Activated B cell treated with CpG ODN at 0.5 μM for 24 hours (primary cell): ENCODE measurements at regions of chr18 and their contacts with region 1.

Region 1: GRCh38 chr18:11883153-11883552 is 25.0 kb downstream of the MPPE1 start:
- DNase-seq: no peak
- ATAC-seq: peak; percentile 95
- H3K4me3 Mint-ChIP-seq: peak overlapping the region; percentile 6
- H3K27ac Mint-ChIP-seq: peak overlapping the region; percentile 74
- H3K4me1 Mint-ChIP-seq: peaks cover 48% of the 10 kb centered on the region
- H3K27me3 Mint-ChIP-seq: no peaks in the 10 kb centered on the region
- CTCF ChIP-seq: no peak

Region 2: DNA sequence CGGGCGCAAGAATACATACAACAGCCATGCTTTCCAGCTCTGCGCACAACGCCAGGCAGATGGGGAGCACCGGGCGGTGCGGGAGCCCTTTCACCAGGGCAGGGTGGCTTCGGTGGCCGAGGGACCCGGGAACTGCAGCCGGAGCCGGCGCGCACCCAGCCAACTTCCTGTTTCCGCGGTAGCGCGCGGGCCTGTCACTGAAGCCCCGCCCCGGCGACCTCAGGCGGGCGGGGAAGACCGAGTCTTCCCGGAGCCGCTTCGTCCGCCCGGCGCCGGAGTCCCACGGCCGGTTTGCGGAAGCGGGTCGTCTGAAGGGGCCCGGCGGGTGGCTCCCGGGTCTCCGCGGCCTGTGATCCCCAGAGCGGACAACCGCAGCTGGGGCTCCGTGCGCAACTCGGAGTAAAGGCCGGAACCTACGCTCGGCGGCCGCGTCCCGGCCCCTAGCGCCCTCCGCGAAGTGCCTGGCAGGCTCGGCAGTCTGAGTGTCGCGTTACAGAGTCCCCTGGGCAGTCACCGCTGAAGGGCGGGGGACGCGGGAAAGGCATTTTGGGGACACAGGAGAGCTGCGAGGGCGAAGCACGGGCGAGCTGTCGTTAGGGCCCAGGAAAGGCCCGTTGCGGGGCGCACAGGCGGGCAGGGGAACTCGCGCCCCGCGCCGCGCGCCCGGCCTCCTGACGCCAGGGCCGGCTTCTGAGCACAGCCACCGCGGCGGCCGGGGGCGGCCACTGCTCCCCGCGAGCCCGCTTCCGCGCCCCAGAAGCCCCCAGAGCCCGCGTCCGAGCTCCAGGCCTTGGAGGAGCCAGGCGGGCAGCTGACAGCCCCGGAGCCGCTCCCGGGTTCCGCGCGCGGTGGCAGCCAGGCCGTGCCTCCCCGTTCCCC is 25.3 kb after region 1 on chr18 and contains the start of gene MPPE1:
- CTCF ChIA-PET with region 1: no interaction called
- POLR2A ChIA-PET with region 1: interaction called, 8 read pairs
- intact Hi-C with region 1: loop called (anchors 1 kb)
- DNase-seq: peak; percentile 87
- ATAC-seq: peak; percentile 91
- H3K4me3 Mint-ChIP-seq: peak within 1 kb of the TSS; percentile 94
- H3K27ac Mint-ChIP-seq: peak within 1 kb of the TSS; percentile 94
- H3K4me1 Mint-ChIP-seq: peaks cover 25% of the 10 kb centered on the region
- H3K27me3 Mint-ChIP-seq: no peaks in the 10 kb centered on the region
- CTCF ChIP-seq: no peak
- total RNA-seq, gene MPPE1: 39.0 and 52.9 TPM in 2 replicates

Region 3: DNA sequence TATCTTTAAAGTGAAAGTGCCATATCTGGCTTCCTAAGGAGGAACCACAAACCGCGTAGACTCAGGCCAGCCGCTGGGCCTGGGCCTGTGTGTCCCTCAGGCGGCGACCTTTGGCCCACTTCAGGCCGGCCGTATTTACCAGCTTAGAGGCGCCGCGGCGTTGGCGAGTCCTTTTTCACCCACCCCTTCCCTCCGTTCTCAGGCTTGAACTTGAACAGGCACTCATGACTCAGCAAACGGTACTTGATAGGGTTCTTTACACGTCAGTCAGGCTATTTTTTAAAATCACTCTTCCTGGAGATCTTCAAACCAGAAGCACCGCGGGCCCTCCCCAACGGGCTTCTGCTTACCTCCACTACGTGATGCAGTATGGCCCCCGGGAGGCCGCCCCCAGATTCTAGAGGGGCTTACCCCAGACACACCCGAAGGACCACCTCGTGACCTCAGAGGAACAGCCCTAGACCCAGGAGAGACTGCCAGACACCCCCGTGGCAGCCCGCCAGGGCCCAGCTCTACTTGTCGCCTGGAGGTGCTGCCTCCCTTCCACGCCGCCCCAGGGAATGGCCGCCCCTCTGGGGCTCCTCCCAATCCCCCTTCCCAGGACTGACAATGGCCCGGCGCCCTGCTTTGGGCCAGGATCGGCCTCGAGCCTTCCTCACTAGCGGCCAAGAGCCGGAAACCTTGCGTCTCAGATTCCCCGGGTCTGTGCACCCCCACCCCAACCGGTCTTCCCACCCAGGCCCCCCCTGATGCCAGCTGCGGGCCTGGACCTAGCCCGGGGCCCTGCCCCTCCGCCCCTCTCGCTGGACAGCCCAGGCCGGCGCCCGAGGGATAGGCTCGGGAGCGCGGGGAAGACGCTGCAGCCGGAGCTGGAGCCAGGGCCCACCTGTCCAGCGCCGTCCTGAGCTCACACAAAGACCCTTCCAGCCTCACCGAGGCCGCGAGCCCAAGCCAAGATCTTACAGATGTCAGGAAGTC is 64.3 kb after region 1 on chr18:
- CTCF ChIA-PET with region 1: no interaction called
- POLR2A ChIA-PET with region 1: no interaction called
- intact Hi-C with region 1: loop called (anchors 2 kb)
- DNase-seq: peak; percentile 49
- ATAC-seq: peak; percentile 81
- H3K4me3 Mint-ChIP-seq: peak overlapping the region; percentile 84
- H3K27ac Mint-ChIP-seq: peak overlapping the region; percentile 70
- H3K4me1 Mint-ChIP-seq: peaks cover 13% of the 10 kb centered on the region
- H3K27me3 Mint-ChIP-seq: no peaks in the 10 kb centered on the region
- CTCF ChIP-seq: no peak